PC-9 (cell line): ENCODE measurements at regions of chr2 and their contacts with region 1.

Region 1: GRCh38 chr2:66429071-66429477 is 5.9 kb upstream of the MEIS1 start:
- DNase-seq: peak in 1 of 2 experiments; percentile 27
- H3K4me3 ChIP-seq: no peak overlapping the region
- H3K27ac ChIP-seq: no peak overlapping the region
- H3K4me1 ChIP-seq: no peaks in the 10 kb centered on the region
- H3K27me3 ChIP-seq: no peaks in the 10 kb centered on the region
- CTCF ChIP-seq: peak; percentile 96

Region 2: GRCh38 chr2:65639156-65639864 is 789.8 kb before region 1 on chr2:
- CTCF ChIA-PET with region 1: interaction called, 3 read pairs
- POLR2A ChIA-PET with region 1: no interaction called
- intact Hi-C with region 1: loop called (anchors 5 kb)
- DNase-seq: no peak
- H3K4me3 ChIP-seq: no peak overlapping the region
- H3K27ac ChIP-seq: no peak overlapping the region
- H3K4me1 ChIP-seq: no peaks in the 10 kb centered on the region
- H3K27me3 ChIP-seq: no peaks in the 10 kb centered on the region
- CTCF ChIP-seq: no peak

Region 3: GRCh38 chr2:66322506-66323260 is 106.4 kb before region 1 on chr2:
- CTCF ChIA-PET with region 1: no interaction called
- POLR2A ChIA-PET with region 1: no interaction called
- intact Hi-C with region 1: no loop called
- DNase-seq: no peak
- H3K4me3 ChIP-seq: no peak overlapping the region
- H3K27ac ChIP-seq: no peak overlapping the region
- H3K4me1 ChIP-seq: no peaks in the 10 kb centered on the region
- H3K27me3 ChIP-seq: no peaks in the 10 kb centered on the region
- CTCF ChIP-seq: no peak

Region 4: DNA sequence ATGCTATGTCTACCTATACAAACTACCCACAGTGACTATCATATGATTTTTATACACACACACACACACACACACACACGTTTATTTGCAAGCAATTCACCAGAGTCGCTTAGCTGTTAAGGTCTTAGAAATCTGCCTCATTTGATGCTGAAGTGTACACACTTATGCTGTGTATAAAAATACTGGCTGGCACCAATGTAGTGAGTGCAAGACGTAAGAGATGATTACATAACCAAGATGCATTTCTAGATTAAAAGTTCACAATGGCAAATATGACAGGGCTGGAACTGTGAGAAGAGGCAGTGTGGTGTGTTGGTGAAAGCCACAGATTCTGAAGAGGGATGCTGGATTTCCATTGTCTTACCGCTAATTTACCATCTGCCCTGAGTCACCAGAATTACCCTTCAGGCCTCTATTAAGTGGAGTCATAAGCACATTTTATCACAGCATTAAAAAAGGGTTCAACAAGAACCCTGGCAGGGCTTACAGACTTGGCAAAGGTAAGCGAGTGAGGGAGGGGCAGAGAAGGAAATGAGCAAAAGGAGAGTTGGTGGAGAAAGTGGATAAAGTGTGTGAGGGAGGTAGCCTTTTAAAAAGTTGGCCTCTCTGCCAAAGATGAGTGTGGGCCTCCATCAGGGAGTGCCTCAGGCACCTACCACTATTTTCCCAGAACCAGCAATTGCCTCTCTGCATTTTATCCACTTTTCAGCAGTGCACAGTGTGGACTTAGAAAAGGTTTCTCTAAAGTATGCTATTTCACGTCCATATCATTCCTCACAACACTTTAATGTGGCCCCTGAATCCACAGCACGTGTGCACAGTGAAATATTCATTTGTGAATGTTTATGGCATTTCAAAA is 27.3 kb after region 1 on chr2:
- CTCF ChIA-PET with region 1: no interaction called
- POLR2A ChIA-PET with region 1: no interaction called
- intact Hi-C with region 1: no loop called
- DNase-seq: no peak
- H3K4me3 ChIP-seq: no peak overlapping the region
- H3K27ac ChIP-seq: no peak overlapping the region
- H3K4me1 ChIP-seq: no peaks in the 10 kb centered on the region
- H3K27me3 ChIP-seq: no peaks in the 10 kb centered on the region
- CTCF ChIP-seq: no peak

Region 5: DNA sequence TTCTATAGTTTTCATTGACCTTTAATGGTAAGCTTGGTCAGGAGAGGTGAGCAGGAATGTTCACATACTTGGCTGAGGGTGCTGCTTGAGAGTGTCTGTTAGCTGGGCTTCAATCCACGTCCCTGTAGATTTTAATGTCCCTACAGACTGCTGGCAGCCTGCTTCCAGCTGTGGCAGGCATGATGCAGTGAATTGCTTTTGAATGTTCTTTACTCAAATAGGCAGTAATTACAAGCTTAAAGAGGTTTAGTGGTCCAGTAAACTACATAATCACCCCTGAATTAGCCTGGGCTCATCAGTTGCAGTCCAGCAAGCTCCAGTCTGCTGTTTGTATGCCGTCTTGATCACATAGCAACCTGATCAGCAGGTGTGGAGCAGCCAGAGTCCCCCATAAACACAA is 107.9 kb after region 1 on chr2:
- CTCF ChIA-PET with region 1: no interaction called
- POLR2A ChIA-PET with region 1: no interaction called
- intact Hi-C with region 1: no loop called
- DNase-seq: no peak
- H3K4me3 ChIP-seq: no peak overlapping the region
- H3K27ac ChIP-seq: no peak overlapping the region
- H3K4me1 ChIP-seq: no peaks in the 10 kb centered on the region
- H3K27me3 ChIP-seq: no peaks in the 10 kb centered on the region
- CTCF ChIP-seq: no peak

Region 6: DNA sequence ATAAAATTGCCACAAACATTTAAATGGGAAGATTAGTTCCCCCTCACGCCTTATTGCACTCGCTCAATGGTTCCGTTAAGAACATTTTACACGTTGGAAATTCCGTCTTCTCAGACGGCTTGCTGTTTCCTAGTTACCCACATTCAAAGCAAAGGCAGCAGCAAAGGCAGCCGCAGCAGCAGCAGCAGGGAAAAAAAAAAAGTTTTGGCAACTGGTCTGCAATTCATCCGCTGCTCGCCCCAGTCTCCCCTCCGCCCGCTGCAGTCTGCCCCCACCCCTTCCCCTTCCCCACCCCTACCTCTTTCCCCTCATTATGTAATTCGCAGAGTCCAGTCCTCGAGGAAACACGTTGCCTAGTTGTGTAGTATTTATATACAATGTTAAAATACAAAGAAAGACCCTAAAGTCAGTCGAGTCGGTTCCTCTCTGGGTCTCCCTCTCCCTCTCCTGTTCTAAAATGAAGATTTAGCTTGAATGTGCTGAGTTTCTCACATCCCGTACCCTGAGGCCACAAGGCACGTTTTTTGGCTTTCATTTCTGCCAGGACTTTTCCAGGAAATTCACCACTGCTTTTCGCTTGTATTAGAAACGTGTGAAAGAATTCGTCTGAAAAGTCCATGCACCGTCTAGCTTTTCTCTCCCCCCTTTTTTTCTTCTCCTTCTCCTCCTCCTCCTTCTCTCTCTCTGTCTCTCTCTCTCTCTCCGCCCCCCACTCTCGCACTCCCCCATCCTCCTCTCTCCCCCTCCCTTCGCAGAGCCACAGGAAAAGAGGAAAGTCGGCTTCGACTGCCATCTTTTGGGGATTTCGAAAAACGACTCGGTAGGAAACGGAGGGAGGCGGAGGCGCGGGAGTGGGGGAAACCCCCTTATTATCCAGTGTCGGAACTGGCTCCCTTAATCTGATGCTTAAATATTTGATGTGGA is 145.9 kb after region 1 on chr2:
- CTCF ChIA-PET with region 1: interaction called, 21 read pairs
- POLR2A ChIA-PET with region 1: no interaction called
- intact Hi-C with region 1: loop called (anchors 1 kb)
- DNase-seq: peak; percentile 41 to 56
- H3K4me3 ChIP-seq: peak overlapping the region; percentile 65; the same call in 1 of the 2 replicates
- H3K27ac ChIP-seq: no peak overlapping the region
- H3K4me1 ChIP-seq: 0 out of 2 replicates have a peak, but pooled peaks cover 19% of the 10 kb centered on the region
- H3K27me3 ChIP-seq: peaks cover 27% of the 10 kb centered on the region; the same call in 1 of the 2 replicates
- CTCF ChIP-seq: peak; percentile 78

Region 7: GRCh38 chr2:67322353-67323001 is 893.4 kb after region 1 on chr2:
- CTCF ChIA-PET with region 1: no interaction called
- POLR2A ChIA-PET with region 1: no interaction called
- intact Hi-C with region 1: loop called (anchors 2 kb)
- DNase-seq: peak; percentile 33 to 41
- H3K4me3 ChIP-seq: no peak overlapping the region
- H3K27ac ChIP-seq: no peak overlapping the region
- H3K4me1 ChIP-seq: no peaks in the 10 kb centered on the region
- H3K27me3 ChIP-seq: no peaks in the 10 kb centered on the region
- CTCF ChIP-seq: peak; percentile 62

Region 8: GRCh38 chr2:67581751-67582150 is 1152.7 kb after region 1 on chr2:
- CTCF ChIA-PET with region 1: no interaction called
- POLR2A ChIA-PET with region 1: no interaction called
- intact Hi-C with region 1: loop called (anchors 5 kb)
- DNase-seq: no peak
- H3K4me3 ChIP-seq: no peak overlapping the region
- H3K27ac ChIP-seq: no peak overlapping the region
- H3K4me1 ChIP-seq: no peaks in the 10 kb centered on the region
- H3K27me3 ChIP-seq: no peaks in the 10 kb centered on the region
- CTCF ChIP-seq: peak; percentile 65